CD4-positive, alpha-beta memory T cell (primary cell): ENCODE measurements at regions of chr7 and their contacts with region 1.

Region 1: DNA sequence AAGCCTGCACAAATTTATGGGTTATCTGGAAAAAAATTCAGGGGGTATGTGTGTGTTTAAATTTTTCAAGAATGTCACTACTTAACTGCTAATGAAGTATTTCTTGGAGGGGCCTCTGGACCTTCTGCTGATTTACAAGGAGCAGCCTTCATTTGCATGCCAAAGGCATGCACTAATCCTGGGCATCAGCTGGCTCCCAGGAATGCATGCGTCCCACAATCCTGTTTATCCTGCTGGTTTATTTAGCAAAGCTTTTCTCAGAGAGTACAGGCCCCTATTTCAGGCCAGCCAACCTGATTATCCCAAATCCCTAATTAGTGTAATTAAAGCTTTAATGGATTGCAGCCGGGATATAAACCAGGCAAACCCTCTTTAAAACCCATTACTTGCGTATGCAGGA is 170.4 kb downstream of the TAX1BP1 start:
- DNase-seq: no peak
- H3K4me3 ChIP-seq: no peak overlapping the region
- H3K4me3 Mint-ChIP-seq: no peak overlapping the region
- H3K27ac ChIP-seq: no peak overlapping the region
- H3K27ac Mint-ChIP-seq: no peak overlapping the region
- H3K4me1 ChIP-seq: no peaks in the 10 kb centered on the region
- H3K4me1 Mint-ChIP-seq: no peaks in the 10 kb centered on the region
- H3K27me3 ChIP-seq: no peaks in the 10 kb centered on the region
- H3K27me3 Mint-ChIP-seq: no peaks in the 10 kb centered on the region

Region 2: DNA sequence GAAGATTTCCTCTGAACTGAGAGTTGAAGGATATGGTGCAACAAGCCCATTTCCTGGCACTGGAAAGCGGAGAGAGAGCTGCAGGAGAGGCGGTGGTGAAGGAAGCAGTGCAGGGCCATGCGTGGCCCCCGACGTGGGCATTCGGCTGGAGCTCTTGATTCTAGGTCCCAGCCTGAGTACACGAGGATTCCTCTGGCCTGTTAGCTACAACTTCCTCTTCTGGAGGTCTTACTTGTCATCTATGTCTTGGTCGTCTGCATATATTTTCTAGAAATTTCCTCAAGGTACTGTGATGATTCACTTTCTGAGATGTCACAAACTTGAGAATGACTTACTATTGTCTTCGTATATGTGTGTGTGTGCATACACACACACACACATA is 329.5 kb after region 1 on chr7:
- CTCF ChIA-PET with region 1: no interaction called
- POLR2A ChIA-PET with region 1: no interaction called
- intact Hi-C with region 1: loop called (anchors 5 kb)
- DNase-seq: no peak
- H3K4me3 ChIP-seq: no peak overlapping the region
- H3K4me3 Mint-ChIP-seq: peak overlapping the region in 4 of 8 donors; percentile 21 to 43 (median 30)
- H3K27ac ChIP-seq: no peak overlapping the region
- H3K27ac Mint-ChIP-seq: peak overlapping the region in 1 of 7 donors; percentile 22
- H3K4me1 ChIP-seq: no peaks in the 10 kb centered on the region
- H3K4me1 Mint-ChIP-seq: peaks cover 8 to 10% (median 8%) of the 10 kb centered on the region in 4 donors
- H3K27me3 ChIP-seq: no peaks in the 10 kb centered on the region
- H3K27me3 Mint-ChIP-seq: peaks cover 6 to 7% of the 10 kb centered on the region in 2 donors